ENCODE measurements at regions of chr10 and their contacts with region 1.

Region 1: GRCh38 chr10:55449981-55450380 is 649.0 kb upstream of the PCDH15 start:
- DNase-seq: no peak
- H3K4me3 ChIP-seq: no peak overlapping the region
- H3K4me3 Mint-ChIP-seq: no peak overlapping the region
- H3K27ac Mint-ChIP-seq: no peak overlapping the region
- H3K4me1 ChIP-seq: no peaks in the 10 kb centered on the region
- H3K4me1 Mint-ChIP-seq: no peaks in the 10 kb centered on the region
- H3K27me3 ChIP-seq: no peaks in the 10 kb centered on the region
- H3K27me3 Mint-ChIP-seq: no peaks in the 10 kb centered on the region
- CTCF ChIP-seq: no peak

Region 2: GRCh38 chr10:55367555-55367954 is 82.4 kb before region 1 on chr10:
- CTCF ChIA-PET with region 1: no interaction called
- POLR2A ChIA-PET with region 1: no interaction called
- intact Hi-C with region 1: no loop called
- DNase-seq: no peak
- H3K4me3 ChIP-seq: no peak overlapping the region
- H3K4me3 Mint-ChIP-seq: no peak overlapping the region
- H3K27ac Mint-ChIP-seq: no peak overlapping the region
- H3K4me1 ChIP-seq: no peaks in the 10 kb centered on the region
- H3K4me1 Mint-ChIP-seq: no peaks in the 10 kb centered on the region
- H3K27me3 ChIP-seq: no peaks in the 10 kb centered on the region
- H3K27me3 Mint-ChIP-seq: no peaks in the 10 kb centered on the region
- CTCF ChIP-seq: no peak

Region 3: GRCh38 chr10:55378196-55378595 is 71.8 kb before region 1 on chr10:
- CTCF ChIA-PET with region 1: no interaction called
- POLR2A ChIA-PET with region 1: no interaction called
- intact Hi-C with region 1: loop called (anchors 2 kb)
- DNase-seq: no peak
- H3K4me3 ChIP-seq: no peak overlapping the region
- H3K4me3 Mint-ChIP-seq: no peak overlapping the region
- H3K27ac Mint-ChIP-seq: no peak overlapping the region
- H3K4me1 ChIP-seq: no peaks in the 10 kb centered on the region
- H3K4me1 Mint-ChIP-seq: no peaks in the 10 kb centered on the region
- H3K27me3 ChIP-seq: no peaks in the 10 kb centered on the region
- H3K27me3 Mint-ChIP-seq: peaks cover 2% of the 10 kb centered on the region
- CTCF ChIP-seq: no peak

Region 4: GRCh38 chr10:55519264-55519663 is 69.3 kb after region 1 on chr10:
- CTCF ChIA-PET with region 1: no interaction called
- POLR2A ChIA-PET with region 1: no interaction called
- intact Hi-C with region 1: no loop called
- DNase-seq: no peak
- H3K4me3 ChIP-seq: no peak overlapping the region
- H3K4me3 Mint-ChIP-seq: no peak overlapping the region
- H3K27ac Mint-ChIP-seq: no peak overlapping the region
- H3K4me1 ChIP-seq: no peaks in the 10 kb centered on the region
- H3K4me1 Mint-ChIP-seq: no peaks in the 10 kb centered on the region
- H3K27me3 ChIP-seq: no peaks in the 10 kb centered on the region
- H3K27me3 Mint-ChIP-seq: no peaks in the 10 kb centered on the region
- CTCF ChIP-seq: no peak

Region 5: DNA sequence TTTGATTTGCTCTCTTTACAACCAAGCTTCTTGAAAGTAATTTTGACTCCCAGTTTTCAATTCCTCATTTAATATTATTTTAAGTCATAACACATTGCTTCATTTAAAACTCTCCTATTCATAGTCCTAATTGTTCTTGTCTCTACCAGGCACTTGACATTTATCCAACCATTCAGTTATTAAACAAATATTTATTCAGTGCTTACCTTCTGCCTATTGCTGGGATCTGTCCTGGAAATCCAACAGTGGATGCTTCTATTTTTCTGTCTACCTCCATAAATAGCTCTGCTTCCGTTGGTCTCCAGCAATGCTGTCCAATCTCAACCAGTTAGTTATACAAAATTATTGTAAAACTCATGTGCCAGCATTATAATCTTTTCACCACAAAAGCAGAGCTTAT is 296.0 kb after region 1 on chr10:
- CTCF ChIA-PET with region 1: no interaction called
- POLR2A ChIA-PET with region 1: no interaction called
- intact Hi-C with region 1: no loop called
- DNase-seq: no peak
- H3K4me3 ChIP-seq: no peak overlapping the region
- H3K4me3 Mint-ChIP-seq: no peak overlapping the region
- H3K27ac Mint-ChIP-seq: no peak overlapping the region
- H3K4me1 ChIP-seq: no peaks in the 10 kb centered on the region
- H3K4me1 Mint-ChIP-seq: no peaks in the 10 kb centered on the region
- H3K27me3 ChIP-seq: no peaks in the 10 kb centered on the region
- H3K27me3 Mint-ChIP-seq: no peaks in the 10 kb centered on the region
- CTCF ChIP-seq: no peak